PC-3 (cell line): ENCODE measurements at regions of chr1 and their contacts with region 1.

Region 1: GRCh38 chr1:208029381-208030287 is 118.7 kb upstream of the CD34 start:
- DNase-seq: no peak
- ATAC-seq: peak; percentile 40; the same call in 1 of the 2 replicates
- H3K4me3 ChIP-seq: no peak overlapping the region
- H3K27ac ChIP-seq: no peak overlapping the region
- H3K4me1 ChIP-seq: no peaks in the 10 kb centered on the region
- H3K27me3 ChIP-seq: no peaks in the 10 kb centered on the region
- CTCF ChIP-seq: no peak

Region 2: DNA sequence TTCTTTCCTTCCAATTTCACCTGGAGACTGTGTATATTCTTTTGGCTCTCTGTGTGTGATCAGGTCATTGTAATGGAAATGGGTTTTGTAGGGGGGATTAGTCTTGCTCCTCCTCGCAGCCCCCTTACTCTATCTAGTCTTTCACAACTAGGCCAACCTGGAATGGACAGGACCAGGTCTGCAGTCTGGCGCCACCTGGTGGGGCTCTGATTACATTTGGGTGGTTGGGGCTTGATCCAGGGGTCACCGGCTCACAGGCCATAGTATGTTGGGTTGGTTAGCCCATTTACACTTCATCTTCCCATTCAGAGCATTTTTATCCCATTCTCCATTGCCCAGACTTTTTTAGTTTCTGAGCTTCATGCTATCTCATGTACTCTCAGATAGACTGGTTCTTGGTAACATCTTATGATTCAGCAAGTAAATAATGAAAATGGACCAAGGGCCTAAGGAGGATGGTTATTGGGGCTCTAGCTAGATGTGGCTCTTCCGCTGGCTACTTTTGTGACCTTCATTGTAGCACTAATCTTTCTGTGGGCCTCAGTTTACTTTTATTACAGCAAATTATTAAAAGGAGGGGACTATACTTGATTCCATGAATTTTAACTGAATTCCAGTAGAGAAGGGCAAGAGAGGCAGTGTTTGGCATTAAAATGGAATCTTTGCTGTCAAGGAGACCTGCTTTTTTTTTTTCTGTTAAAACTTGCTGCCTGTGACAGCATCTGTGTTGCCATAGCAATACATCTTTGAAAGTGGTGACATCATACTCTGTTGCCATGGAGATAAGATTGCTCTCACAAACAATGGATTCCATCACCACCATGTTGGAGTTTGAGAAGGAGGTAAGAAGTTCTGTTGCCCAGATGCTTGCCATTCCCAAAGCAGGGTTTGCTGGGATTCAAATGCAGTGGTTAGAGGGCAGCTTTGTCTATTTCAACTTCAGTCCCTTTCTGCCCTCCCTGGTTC is 64.4 kb after region 1 on chr1:
- CTCF ChIA-PET with region 1: no interaction called
- POLR2A ChIA-PET with region 1: no interaction called
- intact Hi-C with region 1: loop called (anchors 10 kb)
- DNase-seq: peak; percentile 72
- ATAC-seq: peak; percentile 88
- H3K4me3 ChIP-seq: no peak overlapping the region
- H3K27ac ChIP-seq: no peak overlapping the region
- H3K4me1 ChIP-seq: no peaks in the 10 kb centered on the region
- H3K27me3 ChIP-seq: no peaks in the 10 kb centered on the region
- CTCF ChIP-seq: peak; percentile 97